PC-3 (cell line): ENCODE measurements at regions of chr7 and their contacts with region 1.

Region 1: DNA sequence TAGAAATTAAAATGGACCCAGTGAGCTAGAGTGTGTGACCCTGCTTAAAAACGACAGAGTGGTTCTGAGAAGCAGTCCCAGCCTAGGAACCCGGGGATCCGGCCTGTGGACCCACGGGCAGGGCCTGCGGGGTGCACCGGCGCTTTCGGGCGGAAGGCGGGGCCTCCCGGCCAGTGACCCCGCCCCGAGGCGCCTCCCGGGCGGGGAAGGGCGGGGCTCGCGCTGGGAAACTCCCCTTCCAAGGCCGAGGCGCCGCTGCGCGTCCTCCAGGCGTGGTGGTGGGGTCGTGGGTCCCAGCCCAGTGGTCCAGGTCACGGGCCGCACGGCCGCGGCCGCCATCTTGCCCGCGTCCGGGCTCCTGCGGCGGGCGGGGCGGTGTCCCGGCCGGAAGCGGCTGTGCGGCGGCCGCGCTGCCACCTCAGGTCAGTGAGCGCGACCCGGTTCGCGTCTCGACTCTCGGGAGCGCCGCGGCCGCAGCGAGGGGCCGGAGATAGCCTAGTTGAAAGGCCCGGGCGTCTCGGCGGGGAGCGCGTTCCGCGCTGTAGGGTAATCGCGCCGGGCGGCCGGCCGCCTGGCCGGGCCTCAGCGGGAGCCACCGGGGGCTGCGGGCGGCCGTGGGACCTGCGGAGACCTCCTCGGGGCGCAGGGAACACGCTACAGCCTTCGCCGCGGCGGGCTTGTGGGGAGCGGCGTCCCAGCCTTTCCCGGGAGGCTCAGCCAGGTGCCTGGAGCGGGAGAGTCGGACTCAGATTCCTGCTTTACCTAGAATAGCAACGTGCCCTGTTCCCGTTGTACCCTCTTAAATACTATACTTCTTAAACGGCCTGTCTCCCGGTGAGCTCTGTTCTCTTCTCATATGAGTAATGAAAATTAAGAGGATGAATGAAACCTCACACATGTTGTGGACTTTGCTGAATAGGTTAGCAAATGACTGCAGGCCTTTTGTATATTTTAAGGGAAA is at the start of gene MIOS:
- DNase-seq: peak; percentile 81
- ATAC-seq: peak; percentile 74
- H3K4me3 ChIP-seq: peak within 1 kb of the TSS; percentile 86
- H3K27ac ChIP-seq: peak within 1 kb of the TSS; percentile 95
- H3K4me1 ChIP-seq: peaks cover 57% of the 10 kb centered on the region
- H3K27me3 ChIP-seq: no peaks in the 10 kb centered on the region
- CTCF ChIP-seq: no peak
- total RNA-seq, gene MIOS: 18.6 and 26.6 TPM in 2 replicates

Region 2: GRCh38 chr7:7014827-7015610 is 551.9 kb before region 1 on chr7:
- CTCF ChIA-PET with region 1: no interaction called
- POLR2A ChIA-PET with region 1: no interaction called
- intact Hi-C with region 1: loop called (anchors 1 kb)
- DNase-seq: peak; percentile 92
- ATAC-seq: peak; percentile 52
- H3K4me3 ChIP-seq: peak overlapping the region; percentile 52; the same call in 1 of the 2 replicates
- H3K27ac ChIP-seq: peak overlapping the region; percentile 82
- H3K4me1 ChIP-seq: peaks cover 57% of the 10 kb centered on the region
- H3K27me3 ChIP-seq: no peaks in the 10 kb centered on the region
- CTCF ChIP-seq: no peak

Region 3: DNA sequence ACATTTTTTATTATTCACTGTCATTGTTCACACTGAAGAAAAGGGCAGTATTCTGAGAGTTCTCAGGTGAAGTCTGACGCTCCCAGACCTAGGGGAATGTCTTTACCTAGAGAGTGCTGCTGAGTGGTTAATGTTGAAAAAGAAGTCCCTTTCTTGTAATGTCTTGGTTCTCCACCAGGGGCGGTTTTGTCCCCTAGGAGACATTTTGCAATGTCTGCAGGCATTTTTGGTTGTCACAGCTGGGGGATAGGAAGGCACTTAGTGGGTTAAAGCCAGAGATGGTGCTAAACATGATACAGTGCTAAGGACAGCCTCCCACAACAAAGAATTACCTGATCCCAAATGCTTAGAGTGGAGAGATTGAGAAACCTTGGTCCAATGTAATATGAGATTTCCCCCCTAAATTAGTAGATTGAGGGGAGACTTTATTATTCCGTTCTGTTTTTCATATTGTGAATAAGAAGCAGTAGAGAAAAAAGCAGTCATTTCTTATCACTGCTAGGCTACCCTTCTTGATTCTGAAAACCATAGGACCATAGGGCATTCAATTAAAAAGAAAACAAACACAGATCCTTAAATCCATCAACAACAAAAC is 86.8 kb after region 1 on chr7:
- CTCF ChIA-PET with region 1: no interaction called
- POLR2A ChIA-PET with region 1: no interaction called
- intact Hi-C with region 1: no loop called
- DNase-seq: peak; percentile 38
- ATAC-seq: peak; percentile 6
- H3K4me3 ChIP-seq: no peak overlapping the region
- H3K27ac ChIP-seq: peak overlapping the region; percentile 41; the same call in 1 of the 2 replicates
- H3K4me1 ChIP-seq: peaks cover 14% of the 10 kb centered on the region
- H3K27me3 ChIP-seq: no peaks in the 10 kb centered on the region
- CTCF ChIP-seq: peak; percentile 65